WTC11 (cell line): ENCODE measurements at regions of chr14 and their contacts with region 1.

Region 1: DNA sequence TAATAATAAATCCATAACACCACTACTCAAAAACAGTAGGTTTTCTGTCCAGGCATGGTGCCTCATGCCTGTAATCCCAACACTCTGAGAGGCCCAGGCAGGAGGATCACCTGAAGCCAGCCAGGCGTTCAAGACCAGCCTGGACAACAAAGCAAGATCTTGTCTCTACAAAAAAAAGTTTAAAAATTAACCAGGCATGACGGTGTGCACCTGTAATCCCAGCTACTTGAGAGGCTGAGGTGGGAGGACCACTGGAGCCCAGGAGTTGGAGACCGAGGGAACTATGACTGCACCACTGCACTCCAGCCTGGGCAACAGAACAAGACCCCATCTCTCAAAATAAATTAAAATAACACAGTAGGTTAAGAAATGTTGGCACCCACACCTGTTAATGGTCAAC is 44.5 kb upstream of the AP4S1 start:
- DNase-seq: no peak
- ATAC-seq: no peak
- H3K4me3 Mint-ChIP-seq: no peak overlapping the region
- H3K27ac Mint-ChIP-seq: peak overlapping the region; percentile 53; the same call in 1 of the 2 replicates
- H3K4me1 Mint-ChIP-seq: no peaks in the 10 kb centered on the region
- H3K27me3 Mint-ChIP-seq: no peaks in the 10 kb centered on the region
- CTCF ChIP-seq: no peak

Region 2: GRCh38 chr14:30943694-30944093 is 37.3 kb before region 1 on chr14:
- CTCF ChIA-PET with region 1: no interaction called
- POLR2A ChIA-PET with region 1: no interaction called
- DNase-seq: no peak
- ATAC-seq: no peak
- H3K4me3 Mint-ChIP-seq: no peak overlapping the region
- H3K27ac Mint-ChIP-seq: 0 out of 2 replicates have a peak overlapping the region, but pooled peaks have one; percentile 31
- H3K4me1 Mint-ChIP-seq: 0 out of 2 replicates have a peak, but pooled peaks cover 4% of the 10 kb centered on the region
- H3K27me3 Mint-ChIP-seq: no peaks in the 10 kb centered on the region
- CTCF ChIP-seq: no peak

Region 3: GRCh38 chr14:31084385-31084784 is 103.4 kb after region 1 on chr14:
- CTCF ChIA-PET with region 1: interaction called, 10 read pairs
- POLR2A ChIA-PET with region 1: no interaction called
- DNase-seq: no peak
- ATAC-seq: peak; percentile 46; the same call in 1 of the 2 replicates
- H3K4me3 Mint-ChIP-seq: no peak overlapping the region
- H3K27ac Mint-ChIP-seq: no peak overlapping the region
- H3K4me1 Mint-ChIP-seq: no peaks in the 10 kb centered on the region
- H3K27me3 Mint-ChIP-seq: no peaks in the 10 kb centered on the region
- CTCF ChIP-seq: no peak

Region 4: GRCh38 chr14:31261859-31262731 is 281.1 kb after region 1 on chr14:
- CTCF ChIA-PET with region 1: no interaction called
- POLR2A ChIA-PET with region 1: no interaction called
- DNase-seq: no peak
- ATAC-seq: no peak
- H3K4me3 Mint-ChIP-seq: no peak overlapping the region
- H3K27ac Mint-ChIP-seq: no peak overlapping the region
- H3K4me1 Mint-ChIP-seq: peaks cover 10% of the 10 kb centered on the region
- H3K27me3 Mint-ChIP-seq: no peaks in the 10 kb centered on the region
- CTCF ChIP-seq: no peak